Tibial artery (tissue), 4 donors: ENCODE measurements at regions of chr10 and their contacts with region 1.

Region 1: DNA sequence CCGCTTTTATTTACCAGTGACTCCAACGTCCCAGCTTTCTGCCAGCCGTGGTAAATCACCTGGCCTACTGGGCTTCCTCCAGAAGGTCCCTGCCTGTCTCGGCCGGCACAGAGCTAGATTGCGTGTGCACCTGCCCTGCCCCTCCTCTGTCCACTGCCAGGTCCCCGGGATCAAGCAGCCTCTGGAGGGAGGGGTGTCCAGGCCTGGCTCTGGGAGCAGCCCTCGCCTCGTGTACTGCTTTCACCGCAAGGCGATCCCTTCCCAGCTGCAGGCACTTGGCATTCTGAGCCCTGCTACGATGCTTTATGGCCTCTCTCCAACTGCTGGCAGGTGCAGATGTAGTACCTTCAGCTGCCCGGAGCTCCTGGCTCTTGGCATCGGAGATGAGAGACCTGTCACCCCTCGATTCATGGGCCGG is 7.4 kb downstream of the SLC29A3 start:
- DNase-seq: no peak
- H3K4me3 ChIP-seq: no peak overlapping the region
- H3K27ac ChIP-seq: no peak overlapping the region
- H3K4me1 ChIP-seq: no peaks in the 10 kb centered on the region
- H3K27me3 ChIP-seq: no peaks in the 10 kb centered on the region
- CTCF ChIP-seq: no peak

Region 2: DNA sequence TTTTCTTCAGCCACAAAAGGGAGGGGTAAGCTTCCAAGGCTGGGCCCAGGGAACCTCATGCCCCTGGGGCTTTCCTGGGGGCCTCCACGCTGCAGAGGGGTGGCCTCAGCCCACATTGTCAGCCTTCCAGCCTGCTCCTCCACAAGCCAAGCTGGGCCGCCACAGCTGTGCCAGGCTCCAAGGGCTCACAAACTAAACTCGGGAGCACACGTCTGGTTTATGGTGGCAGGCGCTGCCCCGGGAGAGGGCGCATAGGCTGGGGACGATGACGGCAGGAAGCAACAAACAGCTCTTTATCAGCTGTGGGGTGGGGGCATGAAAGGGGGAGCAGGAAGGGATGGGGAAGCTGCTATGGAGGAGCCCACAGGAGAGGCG is 64.0 kb after region 1 on chr10:
- intact Hi-C with region 1: loop called (anchors 5 kb)
- DNase-seq: no peak
- H3K4me3 ChIP-seq: no peak overlapping the region
- H3K27ac ChIP-seq: no peak overlapping the region
- H3K4me1 ChIP-seq: no peaks in the 10 kb centered on the region
- H3K27me3 ChIP-seq: peaks cover 0 to 24% of the 10 kb centered on the region in 2 donors
- CTCF ChIP-seq: no peak